ENCODE measurements at regions of chr1 and their contacts with region 1.

Region 1: GRCh38 chr1:176847052-176847451 is 317.5 kb downstream of the ASTN1 start:
- DNase-seq: no peak

Region 2: DNA sequence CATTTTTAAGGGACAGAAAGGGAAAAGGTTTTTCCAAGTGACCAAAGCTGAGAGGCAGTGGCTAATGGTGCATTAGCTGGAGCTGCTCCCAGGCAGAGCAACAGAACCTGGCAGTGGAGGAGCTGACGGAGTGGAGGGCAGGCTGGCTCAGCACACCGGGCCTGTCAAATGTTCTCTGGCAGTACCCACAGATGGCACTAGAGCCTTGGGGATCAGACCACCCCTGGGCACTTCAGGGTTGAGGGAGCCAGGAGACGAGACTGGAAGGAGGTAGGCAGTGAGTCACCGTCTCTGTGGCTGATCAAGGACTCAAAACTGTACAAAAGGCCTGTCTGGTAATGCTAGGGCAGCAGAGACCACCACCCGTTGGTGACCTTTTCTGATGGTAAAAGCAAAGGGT is 1532.8 kb before region 1 on chr1:
- intact Hi-C with region 1: loop called in 1 of 2 experiments (anchors 5 kb)
- DNase-seq: no peak

Region 3: GRCh38 chr1:176826263-176826662 is 20.8 kb before region 1 on chr1:
- intact Hi-C with region 1: loop called in 1 of 2 experiments (anchors 1 kb)
- DNase-seq: no peak

Region 4: GRCh38 chr1:176897350-176898236 is 50.5 kb after region 1 on chr1:
- intact Hi-C with region 1: no loop called
- DNase-seq: no peak

Measured in posterior vena cava (tissue), 2 donors.